Cardiac septum (tissue), 1 donor: ENCODE measurements at regions of chr17 and their contacts with region 1.

Region 1: DNA sequence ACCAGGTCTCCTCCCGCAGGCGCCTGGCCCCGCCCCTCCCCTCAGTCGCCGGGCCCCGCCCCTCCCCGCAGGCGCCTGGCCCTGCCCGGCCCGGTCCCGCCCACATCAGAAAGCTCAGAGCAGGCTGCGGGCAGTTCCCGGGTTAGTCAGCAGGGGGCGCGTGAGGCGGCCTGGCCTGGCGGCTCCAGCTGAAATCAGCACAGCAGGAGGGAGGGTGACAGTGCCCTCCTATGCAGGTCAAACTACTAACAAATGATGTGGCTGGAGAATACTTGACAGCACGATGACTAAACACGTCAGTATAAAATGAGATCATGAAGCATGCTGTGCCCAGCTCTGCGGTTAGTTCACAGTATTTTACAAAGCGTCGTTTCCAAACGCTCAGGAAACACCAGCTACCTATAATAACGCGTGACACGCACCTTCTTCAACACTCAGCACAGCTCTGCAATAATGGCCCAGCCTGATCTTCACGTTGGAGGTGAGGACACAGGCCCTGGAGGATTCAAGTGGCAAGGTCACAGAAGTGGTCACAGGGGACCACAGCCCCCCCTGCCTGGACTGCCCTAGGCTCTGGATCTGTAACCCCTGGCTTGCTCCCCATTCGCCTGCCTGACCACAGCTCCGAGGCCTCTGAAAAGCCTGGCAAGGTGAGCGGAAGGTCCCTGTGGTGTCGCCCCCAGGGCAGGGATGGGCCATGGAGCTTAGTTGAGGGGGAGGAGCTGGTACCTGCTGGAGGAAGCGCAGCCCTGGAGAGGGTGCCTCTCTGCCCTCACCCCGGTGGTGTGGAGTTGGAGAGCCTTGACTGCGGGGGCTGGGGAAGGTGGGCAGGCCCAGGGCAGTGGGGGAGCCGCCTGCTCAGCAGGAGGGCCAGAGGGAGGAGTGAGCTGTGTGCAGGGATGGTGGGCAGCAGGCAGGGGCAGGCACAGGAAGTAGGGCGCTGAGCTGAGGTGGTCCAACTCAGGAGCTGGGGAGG is 81.2 kb downstream of the KCNJ12 start:
- DNase-seq: peak; percentile 96

Region 2: DNA sequence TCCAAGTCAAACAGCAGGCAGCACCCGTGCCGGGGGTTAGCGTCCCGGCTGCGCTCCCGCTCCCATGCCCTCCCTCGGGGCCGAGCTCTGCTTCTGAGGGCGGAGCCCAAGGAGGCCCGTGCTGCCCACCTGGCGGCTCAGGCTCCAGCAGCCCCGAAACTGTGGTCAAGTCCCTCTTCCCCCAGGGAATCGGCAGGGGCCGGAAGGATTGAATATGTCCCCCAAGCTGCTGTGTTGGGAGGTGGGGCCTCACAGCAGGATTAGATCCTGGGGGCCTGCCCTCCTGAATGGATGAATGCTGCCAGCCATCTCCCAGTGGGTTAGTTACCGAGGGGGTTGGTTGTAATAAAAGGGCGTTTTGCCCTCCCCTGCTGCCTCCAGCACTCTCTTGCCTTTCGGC is 138.9 kb before region 1 on chr17:
- intact Hi-C with region 1: loop called (anchors 5 kb)
- DNase-seq: no peak

Region 3: GRCh38 chr17:21376759-21377690 is 80.3 kb before region 1 on chr17:
- intact Hi-C with region 1: loop called (anchors 5 kb)
- DNase-seq: no peak

Region 4: GRCh38 chr17:21511363-21512198 is 54.2 kb after region 1 on chr17:
- intact Hi-C with region 1: loop called (anchors 1 kb)
- DNase-seq: peak; percentile 92